ENCODE measurements at regions of chr17 and their contacts with region 1.

Region 1: GRCh38 chr17:63904316-63904715 is 6.7 kb downstream of the CSHL1 start:
- DNase-seq: no peak
- ATAC-seq: no peak
- H3K4me3 ChIP-seq: no peak overlapping the region
- H3K4me3 Mint-ChIP-seq: no peak overlapping the region
- H3K27ac ChIP-seq: no peak overlapping the region
- H3K27ac Mint-ChIP-seq: no peak overlapping the region
- H3K4me1 ChIP-seq: no peaks in the 10 kb centered on the region
- H3K4me1 Mint-ChIP-seq: peaks cover 4% of the 10 kb centered on the region
- H3K27me3 ChIP-seq: no peaks in the 10 kb centered on the region
- H3K27me3 Mint-ChIP-seq: peaks cover 8% of the 10 kb centered on the region
- CTCF ChIP-seq: no peak

Region 2: DNA sequence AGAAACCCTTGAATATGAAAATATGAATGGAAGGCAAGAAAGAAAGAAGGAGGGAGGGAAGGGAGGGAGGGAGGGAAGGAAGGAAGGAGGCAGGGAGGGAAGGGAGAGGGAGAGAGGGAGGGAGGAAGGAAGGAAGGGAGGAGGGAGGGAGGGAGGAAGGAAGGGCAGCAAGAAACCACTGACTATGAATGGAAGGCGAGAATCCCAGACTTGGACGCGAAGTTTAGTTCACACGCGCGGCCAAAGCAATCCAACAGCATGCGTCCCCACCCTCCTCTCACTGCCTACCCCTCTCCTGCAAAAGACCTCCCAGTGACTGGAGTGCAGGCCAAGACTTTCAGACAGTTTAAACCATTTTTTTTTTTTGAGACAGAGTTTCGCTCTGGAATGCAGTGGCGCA is 53.9 kb before region 1 on chr17:
- CTCF ChIA-PET with region 1: no interaction called
- POLR2A ChIA-PET with region 1: no interaction called
- intact Hi-C with region 1: no loop called
- DNase-seq: no peak
- ATAC-seq: no peak
- H3K4me3 ChIP-seq: no peak overlapping the region
- H3K4me3 Mint-ChIP-seq: no peak overlapping the region
- H3K27ac ChIP-seq: no peak overlapping the region
- H3K27ac Mint-ChIP-seq: no peak overlapping the region
- H3K4me1 ChIP-seq: peaks cover 7 to 14% of the 10 kb centered on the region in 2 donors
- H3K4me1 Mint-ChIP-seq: peaks cover 16% of the 10 kb centered on the region
- H3K27me3 ChIP-seq: no peaks in the 10 kb centered on the region
- H3K27me3 Mint-ChIP-seq: no peaks in the 10 kb centered on the region
- CTCF ChIP-seq: no peak

Region 3: DNA sequence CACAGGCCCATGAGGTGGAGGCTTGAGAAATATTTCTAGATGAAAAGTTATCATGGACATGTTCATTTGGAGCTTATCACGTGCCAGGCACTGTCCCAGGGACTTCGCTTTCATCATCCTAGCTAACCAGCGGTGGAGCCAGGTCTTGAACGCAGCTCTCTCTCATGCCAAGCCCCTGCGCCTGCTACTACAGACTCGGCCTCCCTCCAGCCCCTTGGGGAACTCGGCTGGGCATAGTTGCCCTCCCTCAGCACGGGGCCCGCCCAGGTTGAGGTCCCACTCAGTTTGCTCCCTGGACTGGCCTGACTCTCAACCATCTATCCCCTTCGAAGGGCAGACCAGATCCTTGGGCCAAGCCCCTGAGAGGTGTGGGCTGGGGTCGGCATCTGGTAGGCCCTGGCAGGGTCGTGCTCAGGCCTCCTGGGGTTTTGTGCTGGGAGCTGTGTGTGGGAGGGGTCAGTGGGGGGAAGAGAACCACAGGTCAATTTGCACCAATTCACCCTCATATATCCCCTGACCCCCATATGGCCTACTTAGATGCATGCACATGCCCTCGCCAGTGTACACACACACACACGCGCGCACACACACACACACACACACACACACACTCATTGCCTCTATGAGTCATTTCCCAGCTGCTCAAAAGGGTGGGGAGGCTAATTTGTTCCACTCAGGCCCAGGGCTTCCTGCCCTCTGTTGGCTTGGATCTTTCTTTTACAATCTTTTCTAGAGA is 80.5 kb after region 1 on chr17:
- CTCF ChIA-PET with region 1: interaction called, 31 read pairs
- POLR2A ChIA-PET with region 1: no interaction called
- intact Hi-C with region 1: no loop called
- DNase-seq: no peak
- ATAC-seq: peak; percentile 80
- H3K4me3 ChIP-seq: no peak overlapping the region
- H3K4me3 Mint-ChIP-seq: no peak overlapping the region
- H3K27ac ChIP-seq: no peak overlapping the region
- H3K27ac Mint-ChIP-seq: no peak overlapping the region
- H3K4me1 ChIP-seq: peaks cover 8 to 17% of the 10 kb centered on the region in 2 donors
- H3K4me1 Mint-ChIP-seq: peaks cover 19% of the 10 kb centered on the region
- H3K27me3 ChIP-seq: no peaks in the 10 kb centered on the region
- H3K27me3 Mint-ChIP-seq: no peaks in the 10 kb centered on the region
- CTCF ChIP-seq: no peak

Region 4: DNA sequence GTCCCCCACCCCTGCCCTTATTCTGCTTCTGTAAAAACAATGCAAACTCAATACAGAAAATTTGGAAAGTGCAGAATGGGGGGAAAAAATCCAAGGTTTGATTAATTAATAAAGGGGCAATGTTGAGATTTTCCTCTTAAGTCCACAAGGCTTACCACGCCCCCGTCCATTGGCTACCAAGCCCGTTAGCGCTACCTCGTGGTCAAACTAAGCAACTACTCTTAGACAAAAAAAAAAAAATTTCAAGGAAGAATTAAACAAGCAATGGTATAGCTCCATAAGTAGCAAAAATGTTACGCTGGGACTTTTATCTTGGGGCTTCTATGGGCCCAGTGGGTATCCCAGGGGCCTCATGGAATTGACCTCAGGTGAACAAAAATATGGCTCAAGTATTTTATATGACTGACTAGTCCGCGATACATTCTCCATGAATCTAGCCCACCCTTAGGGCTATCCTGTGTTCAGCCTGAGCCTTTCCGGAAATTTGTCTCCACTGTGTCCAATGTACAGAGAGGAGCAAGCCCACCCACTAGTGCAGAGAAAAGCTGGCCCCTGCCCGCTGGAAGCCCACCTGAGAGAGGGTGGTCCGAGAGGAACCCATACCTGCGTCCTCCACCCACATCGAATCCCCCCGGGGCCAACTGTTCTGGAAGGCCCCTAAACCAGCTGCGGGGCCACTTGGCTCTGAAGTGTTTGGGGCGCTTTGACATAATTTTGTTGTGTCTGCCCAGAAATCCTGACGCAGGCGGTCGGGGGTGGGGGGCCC is 377.8 kb after region 1 on chr17:
- CTCF ChIA-PET with region 1: interaction called, 3 read pairs
- POLR2A ChIA-PET with region 1: no interaction called
- intact Hi-C with region 1: loop called (anchors 10 kb)
- DNase-seq: peak; percentile 74
- ATAC-seq: peak; percentile 45
- H3K4me3 ChIP-seq: no peak overlapping the region
- H3K4me3 Mint-ChIP-seq: no peak overlapping the region
- H3K27ac ChIP-seq: no peak overlapping the region
- H3K27ac Mint-ChIP-seq: no peak overlapping the region
- H3K4me1 ChIP-seq: no peaks in the 10 kb centered on the region
- H3K4me1 Mint-ChIP-seq: no peaks in the 10 kb centered on the region
- H3K27me3 ChIP-seq: no peaks in the 10 kb centered on the region
- H3K27me3 Mint-ChIP-seq: peaks cover 3% of the 10 kb centered on the region
- CTCF ChIP-seq: peak; percentile 80

Measured in B cell (primary cell).